Activated naive CD4-positive, alpha-beta T cell treated with anti-CD3 and anti-CD28 coated beads for 36 hours (primary cell): ENCODE measurements at regions of chr1 and their contacts with region 1.

Region 1: GRCh38 chr1:211578640-211579433 is at the start of gene SLC30A1:
- DNase-seq: peak; percentile 99
- H3K4me3 Mint-ChIP-seq: peak within 1 kb of the TSS; percentile 90
- H3K27ac Mint-ChIP-seq: peak within 1 kb of the TSS; percentile 75
- H3K4me1 Mint-ChIP-seq: peaks cover 31% of the 10 kb centered on the region
- H3K27me3 Mint-ChIP-seq: no peaks in the 10 kb centered on the region
- total RNA-seq, gene SLC30A1: 4.4 to 4.7 TPM

Region 2: DNA sequence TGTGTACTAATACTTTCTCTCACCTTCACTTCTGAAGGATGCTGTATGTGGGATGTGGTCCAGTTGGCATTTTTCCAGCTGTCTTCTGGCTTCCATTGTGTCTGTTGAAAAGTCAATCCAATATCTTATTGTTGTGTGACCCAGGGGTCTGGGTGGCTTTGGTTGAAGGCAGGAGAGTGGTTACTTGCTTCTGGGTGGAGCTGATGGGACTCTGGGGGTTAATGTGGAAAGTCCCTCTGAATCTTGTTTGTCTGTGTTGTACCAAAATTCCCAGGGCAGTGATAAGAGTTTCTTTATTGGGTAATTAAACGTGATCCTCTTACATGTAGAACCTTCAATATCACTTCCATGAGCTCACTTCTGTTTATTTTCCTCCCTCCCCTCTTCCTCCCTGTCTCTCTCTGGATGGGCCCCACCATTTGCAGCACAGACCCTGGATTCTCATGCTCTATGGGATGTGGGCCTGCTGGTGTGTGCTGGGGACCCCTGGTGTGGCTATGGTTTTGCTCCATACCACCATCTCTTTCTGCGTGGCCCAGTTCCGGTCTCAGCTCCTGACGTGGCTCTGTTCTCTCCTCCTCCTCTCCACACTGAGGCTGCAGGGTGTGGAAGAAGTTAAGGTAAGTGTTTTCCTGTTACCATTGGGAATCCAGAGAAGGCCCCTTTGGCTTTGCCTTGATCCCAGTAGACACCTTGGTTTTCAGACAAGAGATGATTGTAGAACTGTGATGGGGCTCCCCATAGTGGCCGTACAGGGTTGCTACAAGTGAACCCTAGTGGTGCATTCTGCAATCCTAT is 1178.6 kb before region 1 on chr1:
- CTCF ChIA-PET with region 1: no interaction called
- intact Hi-C with region 1: loop called (anchors 5 kb)
- DNase-seq: peak; percentile 85
- H3K4me3 Mint-ChIP-seq: peak overlapping the region; percentile 49
- H3K27ac Mint-ChIP-seq: peak overlapping the region; percentile 93
- H3K4me1 Mint-ChIP-seq: peaks cover 44% of the 10 kb centered on the region
- H3K27me3 Mint-ChIP-seq: peaks cover 5% of the 10 kb centered on the region

Region 3: DNA sequence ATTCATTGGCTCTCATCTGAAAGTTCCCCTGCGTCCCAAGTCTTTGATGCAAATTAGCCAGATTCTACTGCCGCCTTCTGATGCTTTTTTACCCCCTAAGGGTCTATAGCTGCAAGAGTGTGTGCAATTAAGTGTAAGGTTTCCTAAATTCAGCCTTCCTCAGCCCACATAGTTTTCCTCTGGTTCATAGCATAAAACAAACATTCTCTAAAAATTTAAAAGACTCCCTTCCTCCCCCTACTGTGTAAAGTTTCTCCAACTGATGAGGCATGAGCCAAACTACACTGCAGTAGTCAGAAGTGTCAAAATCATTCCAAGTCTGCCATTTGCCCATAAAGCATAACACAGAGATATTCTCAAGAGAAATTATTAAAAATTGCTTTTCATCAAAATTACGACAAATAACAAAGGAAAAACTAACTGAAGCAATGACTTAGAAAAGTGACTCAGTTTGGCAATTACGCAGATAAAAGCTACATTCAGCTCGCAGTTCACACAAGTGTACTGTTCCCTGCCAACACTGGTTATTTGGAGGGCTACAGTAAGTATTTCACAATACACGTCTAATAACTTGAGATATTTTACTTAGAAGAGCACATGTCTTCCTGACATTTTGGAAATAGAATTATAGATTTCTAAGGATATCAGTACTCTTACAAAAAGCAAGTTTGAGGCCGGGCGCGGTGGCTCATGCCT is 460.3 kb before region 1 on chr1:
- CTCF ChIA-PET with region 1: no interaction called
- intact Hi-C with region 1: no loop called
- DNase-seq: no peak
- H3K4me3 Mint-ChIP-seq: no peak overlapping the region
- H3K27ac Mint-ChIP-seq: no peak overlapping the region
- H3K4me1 Mint-ChIP-seq: no peaks in the 10 kb centered on the region
- H3K27me3 Mint-ChIP-seq: peaks cover 29% of the 10 kb centered on the region

Region 4: GRCh38 chr1:211514030-211514754 is 64.6 kb before region 1 on chr1:
- CTCF ChIA-PET with region 1: interaction called, 4 read pairs
- intact Hi-C with region 1: loop called (anchors 1 kb)
- DNase-seq: peak; percentile 90
- H3K4me3 Mint-ChIP-seq: peak overlapping the region; percentile 23
- H3K27ac Mint-ChIP-seq: no peak overlapping the region
- H3K4me1 Mint-ChIP-seq: peaks cover 23% of the 10 kb centered on the region
- H3K27me3 Mint-ChIP-seq: no peaks in the 10 kb centered on the region

Region 5: DNA sequence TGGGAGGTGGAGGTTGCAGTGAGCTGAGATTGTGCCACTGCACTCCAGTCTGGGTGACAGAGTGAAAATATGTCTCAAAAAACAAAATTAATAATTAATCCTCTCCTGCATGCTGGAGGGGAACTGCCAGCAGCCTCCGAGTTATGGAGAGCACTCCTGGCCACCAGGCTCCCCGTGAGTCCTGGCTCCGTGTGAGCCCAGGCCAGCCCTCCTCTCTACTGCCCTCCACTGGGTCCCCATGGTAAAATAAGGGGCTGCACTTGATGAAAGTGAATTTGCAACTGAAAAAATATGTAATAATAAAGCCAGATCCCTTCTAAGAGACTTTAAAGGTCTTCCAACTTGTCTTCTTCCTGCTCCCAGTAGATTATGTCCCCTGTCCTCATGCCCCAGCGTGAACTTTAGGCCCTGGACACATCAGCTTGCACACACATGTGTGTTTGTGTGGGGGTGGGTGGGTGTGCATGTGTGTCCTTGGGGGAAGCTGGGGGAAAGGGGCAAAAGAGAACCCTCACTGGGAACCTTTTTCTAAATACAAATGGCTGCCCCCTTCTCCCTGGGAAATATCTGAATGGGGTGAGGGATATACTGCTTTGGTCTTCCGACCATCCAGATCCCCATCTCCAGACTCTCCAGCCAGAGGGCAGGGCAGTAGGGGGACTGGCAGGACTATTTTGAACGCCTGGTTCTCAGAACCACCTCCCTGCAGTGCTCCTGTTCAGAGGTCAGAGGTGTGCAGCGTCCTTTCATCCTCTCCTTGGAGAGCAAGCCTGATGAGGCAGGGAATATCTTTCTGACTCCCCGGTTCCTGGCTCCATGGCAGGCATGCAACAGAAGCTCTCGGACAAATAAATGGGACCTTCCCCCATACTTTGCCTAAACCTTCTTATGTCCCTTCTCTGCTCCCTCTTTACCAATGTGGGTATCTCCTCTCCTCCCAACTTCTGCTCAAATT is 70.4 kb after region 1 on chr1:
- CTCF ChIA-PET with region 1: interaction called, 9 read pairs
- intact Hi-C with region 1: loop called (anchors 1 kb)
- DNase-seq: peak; percentile 51
- H3K4me3 Mint-ChIP-seq: no peak overlapping the region
- H3K27ac Mint-ChIP-seq: no peak overlapping the region
- H3K4me1 Mint-ChIP-seq: peaks cover under 1% of the 10 kb centered on the region
- H3K27me3 Mint-ChIP-seq: no peaks in the 10 kb centered on the region

Region 6: GRCh38 chr1:211830330-211831142 is 251.7 kb after region 1 on chr1 and contains the start of gene LPGAT1:
- CTCF ChIA-PET with region 1: no interaction called
- intact Hi-C with region 1: loop called (anchors 5 kb)
- DNase-seq: peak; percentile 75
- H3K4me3 Mint-ChIP-seq: peak within 1 kb of the TSS; percentile 82
- H3K27ac Mint-ChIP-seq: peak within 1 kb of the TSS; percentile 75
- H3K4me1 Mint-ChIP-seq: peaks cover 47% of the 10 kb centered on the region
- H3K27me3 Mint-ChIP-seq: no peaks in the 10 kb centered on the region
- total RNA-seq, gene LPGAT1: 18.6 to 21.7 TPM

Region 7: GRCh38 chr1:212432706-212433576 is 854.1 kb after region 1 on chr1 and contains the start of gene NENF:
- CTCF ChIA-PET with region 1: no interaction called
- intact Hi-C with region 1: loop called (anchors 2 kb)
- DNase-seq: peak; percentile 74
- H3K4me3 Mint-ChIP-seq: peak within 1 kb of the TSS; percentile 76
- H3K27ac Mint-ChIP-seq: no peak within 1 kb of the TSS
- H3K4me1 Mint-ChIP-seq: peaks cover 37% of the 10 kb centered on the region
- H3K27me3 Mint-ChIP-seq: no peaks in the 10 kb centered on the region
- total RNA-seq, gene NENF: 27.0 to 30.9 TPM